Mammary epithelial cell (primary cell): ENCODE measurements at regions of chr1 and their contacts with region 1.

Region 1: GRCh38 chr1:226846801-226847200 is 23.6 kb upstream of the PSEN2 start:
- DNase-seq: peak; percentile 50
- H3K4me3 ChIP-seq: no peak overlapping the region
- H3K27ac ChIP-seq: no peak overlapping the region
- H3K4me1 ChIP-seq: peaks cover 8% of the 10 kb centered on the region
- H3K27me3 ChIP-seq: no peaks in the 10 kb centered on the region
- CTCF ChIP-seq: no peak

Region 2: DNA sequence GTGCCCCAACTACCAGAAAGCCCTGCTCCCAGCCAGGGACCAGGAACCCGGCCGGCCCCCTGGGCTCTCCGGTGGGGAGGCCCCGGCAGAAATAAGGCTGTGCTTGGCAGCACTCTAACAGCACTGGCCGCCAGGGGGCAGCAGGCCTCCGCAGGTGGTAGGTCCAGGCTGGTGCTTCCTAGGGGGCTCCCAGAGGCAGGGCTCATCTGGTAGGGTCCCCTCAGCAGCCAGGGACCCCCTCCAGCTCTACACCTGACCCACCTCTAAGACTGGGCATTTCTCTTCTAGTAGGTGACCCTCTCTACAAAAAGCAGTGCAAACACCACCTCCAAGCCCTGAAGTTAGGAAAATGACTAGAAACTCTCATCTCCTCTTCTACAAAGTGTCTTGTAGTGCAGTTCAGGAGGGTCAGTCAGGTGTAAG is 212.6 kb before region 1 on chr1:
- CTCF ChIA-PET with region 1: no interaction called
- dilution Hi-C with region 1: loop called (anchors 10 kb)
- in situ Hi-C with region 1: no loop called
- intact Hi-C with region 1: no loop called
- DNase-seq: peak; percentile 32
- H3K4me3 ChIP-seq: no peak overlapping the region
- H3K27ac ChIP-seq: no peak overlapping the region
- H3K4me1 ChIP-seq: peaks cover 7% of the 10 kb centered on the region
- H3K27me3 ChIP-seq: no peaks in the 10 kb centered on the region
- CTCF ChIP-seq: peak; percentile 73 to 96

Region 3: DNA sequence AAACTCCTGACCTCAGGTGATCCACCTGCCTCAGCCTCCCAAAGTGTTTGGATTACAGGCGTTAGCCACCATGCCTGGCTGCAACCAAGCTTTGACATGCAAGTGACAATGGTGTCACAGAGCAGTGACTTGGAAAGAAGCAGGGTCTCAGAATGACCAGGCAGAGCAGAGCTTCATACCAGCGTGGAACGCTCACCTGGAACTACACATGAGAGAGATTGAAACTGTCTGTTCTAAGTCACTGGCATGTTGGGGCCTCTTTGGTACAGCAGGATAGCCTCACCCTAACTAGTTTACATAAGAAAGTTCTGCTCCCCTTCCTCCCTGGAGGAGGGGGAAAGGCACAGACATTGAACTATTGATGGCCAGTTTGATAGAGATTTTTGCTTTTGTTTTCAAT is 60.3 kb before region 1 on chr1:
- CTCF ChIA-PET with region 1: no interaction called
- dilution Hi-C with region 1: no loop called
- in situ Hi-C with region 1: no loop called
- intact Hi-C with region 1: no loop called
- DNase-seq: no peak
- H3K4me3 ChIP-seq: no peak overlapping the region
- H3K27ac ChIP-seq: no peak overlapping the region
- H3K4me1 ChIP-seq: no peaks in the 10 kb centered on the region
- H3K27me3 ChIP-seq: peaks cover 2% of the 10 kb centered on the region
- CTCF ChIP-seq: no peak